ENCODE measurements at regions of chr1 and their contacts with region 1.

Region 1: GRCh38 chr1:171984850-171985485 is 143.7 kb downstream of the DNM3 start:
- DNase-seq: peak in 4 of 14 experiments; percentile 6 to 59 (median 58)
- ATAC-seq: peak; percentile 63
- H3K4me3 ChIP-seq: no peak overlapping the region
- H3K4me3 Mint-ChIP-seq: no peak overlapping the region
- H3K27ac ChIP-seq: no peak overlapping the region
- H3K27ac Mint-ChIP-seq: no peak overlapping the region
- H3K4me1 ChIP-seq: no peaks in the 10 kb centered on the region
- H3K4me1 Mint-ChIP-seq: no peaks in the 10 kb centered on the region
- H3K27me3 ChIP-seq: no peaks in the 10 kb centered on the region
- H3K27me3 Mint-ChIP-seq: no peaks in the 10 kb centered on the region
- CTCF ChIP-seq: peak; percentile 79

Region 2: DNA sequence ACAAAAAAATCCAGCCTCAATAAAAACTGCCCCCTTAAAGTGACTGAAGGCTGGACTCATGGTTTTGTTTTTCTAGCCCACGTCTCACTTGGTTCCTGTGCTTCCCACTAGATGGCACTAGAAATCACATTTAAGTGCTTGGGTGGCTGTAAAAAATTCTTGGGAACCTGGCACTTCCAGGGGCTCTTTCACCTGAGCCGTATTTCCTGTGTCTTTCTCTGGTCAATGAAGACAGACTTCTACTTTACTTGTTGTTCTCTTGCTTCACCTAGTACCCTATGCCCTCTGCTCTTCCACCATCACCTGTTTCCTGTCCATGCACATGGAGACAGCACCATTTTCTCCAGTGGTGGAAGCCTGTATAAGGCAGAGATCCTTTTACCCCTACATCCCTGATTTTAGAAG is 183.5 kb before region 1 on chr1:
- CTCF ChIA-PET with region 1: interaction called, 3 read pairs
- POLR2A ChIA-PET with region 1: interaction called, 3 read pairs
- intact Hi-C with region 1: loop called (anchors 1 kb)
- DNase-seq: peak in 4 of 14 experiments; percentile 18 to 55 (median 44)
- ATAC-seq: no peak
- H3K4me3 ChIP-seq: no peak overlapping the region
- H3K4me3 Mint-ChIP-seq: no peak overlapping the region
- H3K27ac ChIP-seq: no peak overlapping the region
- H3K27ac Mint-ChIP-seq: no peak overlapping the region
- H3K4me1 ChIP-seq: no peaks in the 10 kb centered on the region
- H3K4me1 Mint-ChIP-seq: peaks cover 6% of the 10 kb centered on the region
- H3K27me3 ChIP-seq: no peaks in the 10 kb centered on the region
- H3K27me3 Mint-ChIP-seq: no peaks in the 10 kb centered on the region
- CTCF ChIP-seq: peak; percentile 64

Measured in CD4-positive, alpha-beta T cell (primary cell).